HepG2 (cell line): ENCODE measurements at regions of chr6 and their contacts with region 1.

Region 1: DNA sequence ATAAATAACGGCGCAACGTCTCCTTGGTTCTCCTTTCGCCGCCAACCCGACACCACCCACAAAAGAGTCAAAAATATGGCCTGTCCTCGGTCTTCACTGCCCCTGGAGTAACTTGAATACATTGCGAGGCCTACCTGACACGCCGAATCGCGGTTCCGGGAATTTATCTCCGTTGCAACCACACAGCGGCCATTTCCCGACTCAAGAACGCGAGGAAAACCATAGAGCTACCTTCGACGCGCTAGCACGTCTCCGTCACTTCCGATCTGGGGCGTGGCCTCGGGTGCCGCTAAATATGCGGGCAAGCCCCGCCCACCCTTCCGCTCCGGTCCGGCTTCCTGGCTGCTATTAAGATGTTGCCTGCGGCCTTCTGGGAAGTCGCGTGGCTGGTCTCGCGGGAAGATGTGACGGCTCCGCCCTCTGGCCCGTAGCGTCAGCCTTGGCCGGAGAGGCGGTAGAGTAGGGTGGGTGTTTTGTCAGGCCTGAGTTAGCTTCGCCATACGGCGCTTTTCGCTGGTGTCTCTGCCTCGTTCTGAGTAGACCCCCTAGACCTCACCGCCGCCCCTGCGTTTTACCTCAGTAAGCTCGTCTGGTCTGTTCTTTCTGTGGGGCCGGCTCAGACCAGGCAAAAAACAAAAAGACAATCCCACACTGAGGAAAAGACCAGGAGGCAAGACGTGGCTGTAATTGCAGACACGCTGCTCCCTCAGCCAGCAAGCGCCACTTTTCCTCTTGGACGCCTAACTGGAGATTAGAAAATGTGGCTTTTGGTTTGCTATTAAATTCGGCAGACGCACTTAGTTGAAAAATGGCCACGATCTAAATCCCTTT is at the start of gene BCLAF1:
- DNase-seq: peak; percentile 99
- ATAC-seq: peak; percentile 94
- H3K4me3 ChIP-seq: peak within 1 kb of the TSS; percentile 82 to 95 (median 93)
- H3K27ac ChIP-seq: peak within 1 kb of the TSS; percentile 99
- H3K4me1 ChIP-seq: peaks cover 40% of the 10 kb centered on the region
- H3K27me3 ChIP-seq: no peaks in the 10 kb centered on the region; a peak in 1 of 5 replicates
- CTCF ChIP-seq: no peak
- EP300 ChIP-seq: peak in 1 of 2 experiments; percentile 45; a peak in 1 of 4 replicates
- POLR2A ChIP-seq: peak; percentile 98 to 99
- RAD21 ChIP-seq: peak; percentile 47; the same call in 1 of the 2 replicates
- total RNA-seq, gene BCLAF1: 292 and 439 TPM in 2 replicates

Region 2: DNA sequence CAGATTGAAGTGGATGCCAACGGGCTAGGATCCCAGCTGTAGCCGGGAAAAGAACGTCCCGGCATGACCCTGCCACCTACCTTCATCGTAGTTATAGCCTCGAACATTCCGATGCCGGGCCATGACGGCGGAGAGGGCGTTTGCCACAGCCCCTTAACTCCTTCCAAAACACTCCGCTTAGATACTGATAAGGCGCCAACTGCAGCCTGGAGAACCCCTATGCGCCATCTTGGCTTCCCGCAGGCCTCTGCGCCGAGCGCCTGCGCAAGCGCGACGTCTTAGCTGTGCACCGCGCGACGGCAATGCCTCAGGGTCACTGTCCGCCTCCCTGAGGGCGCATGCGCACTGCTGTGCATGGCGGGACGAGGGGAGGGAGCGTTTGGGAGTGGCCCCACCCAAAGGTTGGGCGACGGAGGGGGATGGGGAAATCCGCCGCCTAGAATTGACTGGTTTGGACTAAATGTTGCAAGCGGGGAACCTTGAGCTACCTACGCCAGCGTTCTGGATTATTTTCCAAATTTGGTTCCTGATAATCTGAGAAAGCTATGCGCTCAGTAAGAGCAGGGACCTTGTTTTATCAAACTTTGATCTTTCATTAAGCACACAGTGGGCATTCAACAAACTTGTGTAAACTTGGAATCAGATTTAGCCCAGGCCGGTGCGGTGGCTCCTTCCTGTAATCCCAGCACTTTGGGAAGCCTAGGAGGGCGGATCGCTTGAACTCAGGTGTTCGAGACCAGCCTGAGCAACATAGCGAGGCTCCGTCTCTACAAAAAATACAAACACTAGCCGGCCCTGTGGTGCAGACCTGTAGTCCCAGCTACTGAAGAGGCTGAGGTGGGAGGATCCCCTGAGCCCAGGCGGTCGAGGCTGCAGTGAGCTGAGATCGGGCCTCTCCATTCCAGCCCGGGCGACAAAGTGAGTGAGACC is 1235.0 kb before region 1 on chr6 and contains the start of gene HBS1L:
- CTCF ChIA-PET with region 1: no interaction called
- POLR2A ChIA-PET with region 1: interaction called, 14 read pairs
- in situ Hi-C with region 1: no loop called
- intact Hi-C with region 1: no loop called
- DNase-seq: peak; percentile 97
- ATAC-seq: peak; percentile 99
- H3K4me3 ChIP-seq: peak within 1 kb of the TSS; percentile 83 to 93 (median 86)
- H3K27ac ChIP-seq: peak within 1 kb of the TSS; percentile 83
- H3K4me1 ChIP-seq: peaks cover 27% of the 10 kb centered on the region
- H3K27me3 ChIP-seq: no peaks in the 10 kb centered on the region; a peak in 1 of 5 replicates
- CTCF ChIP-seq: no peak
- EP300 ChIP-seq: peak in 1 of 2 experiments; percentile 45; a peak in 2 of 4 replicates
- POLR2A ChIP-seq: peak; percentile 96 to 97
- RAD21 ChIP-seq: no peak; the same call in 1 of the 2 replicates
- total RNA-seq, gene HBS1L: 138 and 222 TPM in 2 replicates

Region 3: DNA sequence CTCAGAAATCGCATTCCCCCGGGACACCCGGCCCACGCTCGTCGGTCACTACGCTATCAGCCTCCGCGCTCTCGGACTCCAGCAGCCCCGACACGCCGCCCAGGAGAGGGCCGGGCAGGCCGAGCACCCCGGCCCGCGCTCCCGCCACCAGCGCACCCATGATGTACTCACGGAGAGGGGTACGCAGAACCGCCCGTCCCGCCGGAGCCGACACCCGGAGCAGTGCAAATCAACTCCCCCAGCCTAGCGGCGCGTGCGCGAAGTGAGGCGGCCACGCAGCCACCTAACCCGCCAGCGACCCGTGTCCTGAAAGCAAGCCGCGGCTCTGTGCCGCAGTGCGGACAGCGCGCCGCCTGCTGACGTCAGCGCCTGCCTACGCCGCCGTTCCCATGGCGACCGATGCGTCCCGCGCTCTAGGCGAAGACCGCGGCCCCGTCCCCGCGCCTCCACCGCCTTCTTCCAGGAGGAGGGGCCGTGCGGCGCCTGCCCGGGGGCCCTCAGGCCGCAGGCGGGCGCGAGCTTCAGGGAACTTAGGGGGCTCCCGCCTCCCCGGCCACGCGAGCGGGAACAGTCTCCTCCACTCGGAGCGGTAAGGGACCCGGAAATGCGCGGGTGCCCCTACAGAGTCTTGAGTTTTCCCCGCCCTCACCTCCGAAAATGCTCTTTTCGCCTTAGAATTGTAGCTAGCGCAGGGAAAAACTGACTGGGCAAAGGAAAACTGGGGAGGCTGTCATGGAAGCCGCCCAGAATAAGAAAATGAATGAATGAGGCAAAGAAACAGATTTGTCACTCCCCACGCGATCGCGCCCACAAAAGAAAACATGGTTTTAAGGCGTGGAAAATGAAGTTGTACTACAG is 792.2 kb before region 1 on chr6 and contains the start of gene AHI1:
- CTCF ChIA-PET with region 1: no interaction called
- POLR2A ChIA-PET with region 1: interaction called, 54 read pairs
- in situ Hi-C with region 1: no loop called
- intact Hi-C with region 1: loop called (anchors 2 kb)
- DNase-seq: peak; percentile 91
- ATAC-seq: peak; percentile 95
- H3K4me3 ChIP-seq: peak within 1 kb of the TSS; percentile 78 to 92 (median 89)
- H3K27ac ChIP-seq: peak within 1 kb of the TSS; percentile 94
- H3K4me1 ChIP-seq: peaks cover 18% of the 10 kb centered on the region
- H3K27me3 ChIP-seq: no peaks in the 10 kb centered on the region; a peak in 1 of 5 replicates
- CTCF ChIP-seq: peak; percentile 21; the same call in 1 of the 2 replicates
- EP300 ChIP-seq: 0 out of 4 replicates have a peak, but pooled peaks of 1 of the 2 experiments have one; percentile 4
- POLR2A ChIP-seq: peak; percentile 90 to 93
- RAD21 ChIP-seq: peak; percentile 45; the same call in 1 of the 2 replicates
- total RNA-seq, gene AHI1: 18.0 and 18.6 TPM in 2 replicates

Region 4: GRCh38 chr6:136235217-136235532 is 54.6 kb before region 1 on chr6:
- CTCF ChIA-PET with region 1: no interaction called
- POLR2A ChIA-PET with region 1: interaction called, 11 read pairs
- in situ Hi-C with region 1: no loop called
- intact Hi-C with region 1: no loop called
- DNase-seq: peak; percentile 23
- ATAC-seq: peak; percentile 33; the same call in 2 of the 3 replicates
- H3K4me3 ChIP-seq: no peak overlapping the region
- H3K27ac ChIP-seq: no peak overlapping the region
- H3K4me1 ChIP-seq: peaks cover 10% of the 10 kb centered on the region
- H3K27me3 ChIP-seq: no peaks in the 10 kb centered on the region
- CTCF ChIP-seq: no peak
- EP300 ChIP-seq: no peak
- POLR2A ChIP-seq: no peak
- RAD21 ChIP-seq: no peak

Region 5: GRCh38 chr6:136249811-136250685 is 39.7 kb before region 1 on chr6 and contains the start of gene MTFR2:
- CTCF ChIA-PET with region 1: no interaction called
- POLR2A ChIA-PET with region 1: interaction called, 85 read pairs
- in situ Hi-C with region 1: loop called (anchors 5 kb)
- intact Hi-C with region 1: loop called (anchors 1 kb)
- DNase-seq: peak; percentile 100
- ATAC-seq: peak; percentile 93
- H3K4me3 ChIP-seq: peak within 1 kb of the TSS; percentile 86 to 96 (median 88)
- H3K27ac ChIP-seq: peak within 1 kb of the TSS; percentile 57
- H3K4me1 ChIP-seq: peaks cover 19% of the 10 kb centered on the region
- H3K27me3 ChIP-seq: no peaks in the 10 kb centered on the region; a peak in 1 of 5 replicates
- CTCF ChIP-seq: peak; percentile 51
- EP300 ChIP-seq: peak in 1 of 2 experiments; percentile 26; a peak in 1 of 4 replicates
- POLR2A ChIP-seq: peak; percentile 89 to 92
- RAD21 ChIP-seq: peak; percentile 27
- total RNA-seq, gene MTFR2: 10.7 and 12.5 TPM in 2 replicates

Region 6: DNA sequence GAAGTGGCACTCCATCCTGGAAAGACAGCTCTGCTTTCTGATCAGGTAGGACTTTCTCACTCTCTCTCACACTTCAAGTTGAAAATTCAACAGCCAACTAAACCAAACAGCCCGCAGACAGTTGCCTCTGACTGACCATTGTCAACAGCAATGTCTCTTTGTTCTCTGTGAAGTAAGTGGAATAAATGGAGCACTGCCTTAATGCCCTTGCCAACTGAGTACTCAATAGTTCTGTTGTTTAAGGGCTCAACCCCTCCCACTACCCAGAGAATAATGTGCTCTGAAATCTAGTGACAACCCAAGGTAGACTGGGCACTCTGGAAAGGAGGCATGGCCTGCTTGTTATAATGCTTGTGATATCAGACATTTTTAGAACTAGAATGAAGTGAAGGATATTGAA is 16.7 kb after region 1 on chr6:
- CTCF ChIA-PET with region 1: no interaction called
- POLR2A ChIA-PET with region 1: interaction called, 13 read pairs
- in situ Hi-C with region 1: no loop called
- intact Hi-C with region 1: no loop called
- DNase-seq: no peak
- ATAC-seq: no peak; the same call in 2 of the 3 replicates
- H3K4me3 ChIP-seq: no peak overlapping the region
- H3K27ac ChIP-seq: no peak overlapping the region
- H3K4me1 ChIP-seq: no peaks in the 10 kb centered on the region
- H3K27me3 ChIP-seq: peaks cover 0 to 4% of the 10 kb centered on the region in 2 experiments; a peak in 2 of 5 replicates
- CTCF ChIP-seq: no peak
- EP300 ChIP-seq: no peak
- POLR2A ChIP-seq: no peak
- RAD21 ChIP-seq: no peak

Region 7: DNA sequence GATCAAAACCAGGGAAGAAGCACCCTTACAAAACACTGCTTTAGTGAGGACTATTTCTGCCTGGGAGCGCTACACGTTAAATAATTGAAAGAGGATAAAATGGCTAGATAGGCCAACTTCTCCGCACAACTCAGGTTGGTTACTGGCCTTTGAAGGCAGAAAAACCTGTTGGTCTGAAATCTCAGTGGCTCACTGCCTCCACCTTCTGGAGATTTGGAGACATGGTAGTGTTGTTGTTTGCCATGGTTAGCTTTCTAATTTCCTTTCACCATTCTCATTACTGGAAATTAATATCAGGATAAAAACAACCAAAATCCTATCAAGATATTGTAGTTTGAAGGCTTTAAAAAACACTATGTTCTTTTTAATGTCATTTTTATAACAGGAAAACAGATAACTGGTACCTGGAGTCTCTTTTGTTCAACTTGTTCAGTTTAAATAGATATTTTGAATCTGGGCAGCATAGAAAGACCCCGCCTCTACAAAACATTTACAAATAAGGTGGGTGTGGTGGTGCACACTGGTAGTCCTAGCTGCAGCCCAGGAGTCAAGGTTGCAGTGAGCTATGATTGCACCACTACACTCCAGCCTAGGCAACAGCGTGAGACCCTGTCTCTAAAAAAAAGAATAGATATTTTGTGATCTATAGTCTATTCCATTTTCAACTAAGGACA is 27.4 kb after region 1 on chr6:
- CTCF ChIA-PET with region 1: no interaction called
- POLR2A ChIA-PET with region 1: interaction called, 14 read pairs
- in situ Hi-C with region 1: no loop called
- intact Hi-C with region 1: loop called (anchors 2 kb)
- DNase-seq: peak; percentile 62
- ATAC-seq: peak; percentile 95
- H3K4me3 ChIP-seq: no peak overlapping the region
- H3K27ac ChIP-seq: no peak overlapping the region
- H3K4me1 ChIP-seq: no peaks in the 10 kb centered on the region
- H3K27me3 ChIP-seq: no peaks in the 10 kb centered on the region; a peak in 2 of 5 replicates
- CTCF ChIP-seq: peak; percentile 86
- EP300 ChIP-seq: no peak
- POLR2A ChIP-seq: no peak
- RAD21 ChIP-seq: peak; percentile 69

Region 8: GRCh38 chr6:136365776-136366354 is 76.1 kb after region 1 on chr6:
- CTCF ChIA-PET with region 1: no interaction called
- POLR2A ChIA-PET with region 1: no interaction called
- in situ Hi-C with region 1: no loop called
- intact Hi-C with region 1: no loop called
- DNase-seq: no peak
- ATAC-seq: no peak
- H3K4me3 ChIP-seq: no peak overlapping the region
- H3K27ac ChIP-seq: no peak overlapping the region
- H3K4me1 ChIP-seq: no peaks in the 10 kb centered on the region
- H3K27me3 ChIP-seq: peaks cover 2 to 5% of the 10 kb centered on the region in 2 experiments; a peak in 3 of 5 replicates
- CTCF ChIP-seq: no peak
- EP300 ChIP-seq: no peak
- POLR2A ChIP-seq: no peak
- RAD21 ChIP-seq: no peak